Heart left ventricle (tissue), 16 donors: ENCODE measurements at regions of chr2 and their contacts with region 1.

Region 1: GRCh38 chr2:64661741-64662169 is 8.0 kb upstream of the SERTAD2 start:
- DNase-seq: no peak
- ATAC-seq: no peak
- H3K4me3 ChIP-seq: no peak overlapping the region
- H3K27ac ChIP-seq: peak overlapping the region in 1 of 12 donors; percentile 61
- H3K4me1 ChIP-seq: peaks cover 0 to 32% (median 3%) of the 10 kb centered on the region in 12 donors
- H3K27me3 ChIP-seq: no peaks in the 10 kb centered on the region
- CTCF ChIP-seq: no peak
- POLR2A ChIP-seq: no peak

Region 2: GRCh38 chr2:64698668-64699444 is 37.1 kb after region 1 on chr2:
- intact Hi-C with region 1: loop called in 1 of 10 experiments (anchors 5 kb)
- DNase-seq: no peak
- ATAC-seq: no peak
- H3K4me3 ChIP-seq: no peak overlapping the region
- H3K27ac ChIP-seq: peak overlapping the region in 1 of 12 donors; percentile 30
- H3K4me1 ChIP-seq: peaks cover 0 to 23% (median 0%) of the 10 kb centered on the region in 12 donors
- H3K27me3 ChIP-seq: no peaks in the 10 kb centered on the region
- CTCF ChIP-seq: no peak
- POLR2A ChIP-seq: no peak

Region 3: GRCh38 chr2:64730551-64731262 is 69.0 kb after region 1 on chr2:
- intact Hi-C with region 1: loop called in 2 of 10 experiments (anchors 5 kb)
- DNase-seq: peak in 4 of 5 donors; percentile 50 to 77 (median 66)
- ATAC-seq: peak; percentile 73 to 93 (median 90)
- H3K4me3 ChIP-seq: peak overlapping the region in 11 of 12 donors; percentile 3 to 60 (median 47)
- H3K27ac ChIP-seq: peak overlapping the region in 11 of 12 donors; percentile 29 to 92 (median 60)
- H3K4me1 ChIP-seq: peaks cover 0 to 52% (median 10%) of the 10 kb centered on the region in 12 donors
- H3K27me3 ChIP-seq: no peaks in the 10 kb centered on the region
- CTCF ChIP-seq: no peak
- POLR2A ChIP-seq: no peak